PC-9 (cell line): ENCODE measurements at regions of chr6 and their contacts with region 1.

Region 1: GRCh38 chr6:30102970-30103874 is 9.7 kb downstream of the TRIM31 start:
- DNase-seq: peak; percentile 72 to 85
- H3K4me3 ChIP-seq: peak overlapping the region; percentile 55; the same call in 1 of the 2 replicates
- H3K27ac ChIP-seq: no peak overlapping the region
- H3K4me1 ChIP-seq: peaks cover 54% of the 10 kb centered on the region
- H3K27me3 ChIP-seq: no peaks in the 10 kb centered on the region
- CTCF ChIP-seq: peak; percentile 94

Region 2: DNA sequence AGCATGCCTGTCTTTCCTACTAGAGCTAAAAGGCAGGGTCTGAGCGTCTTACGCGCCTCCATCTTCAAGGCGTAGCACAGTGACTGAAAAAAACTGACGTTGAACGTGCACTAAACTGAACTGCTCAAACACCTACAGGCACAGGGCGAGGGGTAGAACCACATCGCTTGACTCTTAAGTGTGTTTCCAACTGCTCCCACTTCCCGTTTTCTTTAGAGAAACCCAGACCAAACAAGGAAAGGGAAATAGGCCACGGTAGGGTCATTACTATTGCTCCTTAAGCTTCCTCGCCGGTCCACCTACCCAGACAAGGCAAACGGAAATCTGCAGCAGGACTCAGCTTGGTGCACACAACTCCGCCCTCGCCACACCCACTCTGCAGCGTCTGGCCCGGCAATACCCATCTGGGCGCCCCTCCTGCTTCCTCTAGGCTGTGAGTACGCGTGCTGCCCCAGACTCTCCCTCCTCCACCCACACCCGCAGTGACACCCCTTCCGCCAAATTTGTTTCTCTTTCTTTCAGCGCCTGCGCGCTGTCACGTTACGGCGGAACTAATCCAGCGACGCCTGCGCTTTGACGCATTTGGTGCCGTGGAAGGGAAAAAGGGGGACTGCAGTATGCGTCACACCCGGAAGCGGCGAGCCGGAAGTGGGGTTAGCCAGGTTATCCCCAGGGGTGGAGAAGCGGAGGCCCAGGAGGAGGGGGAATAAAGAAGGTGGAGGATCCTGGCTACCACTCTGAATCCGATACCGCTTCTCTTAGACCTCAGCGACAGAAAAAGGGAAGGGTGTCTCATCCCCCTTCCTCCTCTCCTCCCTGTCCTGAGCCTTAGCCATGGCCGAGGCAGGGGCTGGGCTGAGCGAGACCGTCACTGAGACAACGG is 36.4 kb before region 1 on chr6 and contains the start of gene PPP1R11:
- CTCF ChIA-PET with region 1: interaction called, 7 read pairs
- POLR2A ChIA-PET with region 1: interaction called, 5 read pairs
- intact Hi-C with region 1: loop called (anchors 1 kb)
- DNase-seq: peak; percentile 96 to 99
- H3K4me3 ChIP-seq: peak within 1 kb of the TSS; percentile 81
- H3K27ac ChIP-seq: peak within 1 kb of the TSS; percentile 40
- H3K4me1 ChIP-seq: peaks cover 24% of the 10 kb centered on the region
- H3K27me3 ChIP-seq: no peaks in the 10 kb centered on the region
- CTCF ChIP-seq: no peak
- total RNA-seq, gene PPP1R11: 48.3 and 49.3 TPM in 2 replicates

Region 3: GRCh38 chr6:30091577-30092381 is 11.4 kb before region 1 on chr6:
- CTCF ChIA-PET with region 1: interaction called, 5 read pairs
- POLR2A ChIA-PET with region 1: interaction called, 8 read pairs
- intact Hi-C with region 1: loop called (anchors 1 kb)
- DNase-seq: peak; percentile 88 to 94
- H3K4me3 ChIP-seq: no peak overlapping the region
- H3K27ac ChIP-seq: peak overlapping the region; percentile 65
- H3K4me1 ChIP-seq: peaks cover 46% of the 10 kb centered on the region
- H3K27me3 ChIP-seq: no peaks in the 10 kb centered on the region
- CTCF ChIP-seq: no peak

Region 4: DNA sequence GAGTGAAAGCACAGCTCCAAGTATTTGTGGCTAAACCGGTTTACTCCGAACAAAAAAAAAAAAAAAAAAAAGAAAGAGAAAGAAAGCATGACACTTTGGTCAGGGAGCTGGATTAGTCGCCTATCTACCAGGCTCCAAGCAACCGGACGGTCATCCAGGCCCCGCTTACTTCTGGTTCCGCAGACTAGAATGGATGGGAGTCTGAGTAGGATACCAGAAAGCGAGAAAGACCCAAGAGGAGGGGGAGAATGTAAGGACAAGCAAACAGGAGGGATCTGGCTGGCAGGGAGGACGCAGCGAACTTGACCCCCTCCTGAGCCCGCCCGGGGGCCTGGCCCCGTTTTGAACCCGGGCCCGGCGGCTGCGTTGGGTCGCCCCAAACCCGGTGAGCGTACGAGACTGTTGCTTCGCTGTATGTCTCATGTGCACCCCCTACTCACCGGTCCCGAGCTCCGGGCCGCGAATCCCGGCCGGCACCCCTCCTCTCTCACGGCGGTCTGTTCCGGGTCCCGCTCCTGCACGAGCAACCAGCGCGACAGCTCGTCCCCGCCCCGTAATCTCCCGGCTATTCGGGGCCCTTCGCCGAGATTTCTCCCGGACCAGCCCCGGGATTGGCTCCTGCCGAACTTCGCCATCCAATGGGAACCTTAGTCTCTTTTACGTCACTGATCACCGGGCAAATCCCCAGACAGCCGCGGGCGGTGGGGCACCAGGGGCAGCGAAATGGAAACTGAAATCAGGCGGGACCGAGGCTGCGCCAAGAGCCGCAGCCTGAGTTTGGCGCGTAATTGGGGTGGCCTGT is 109.8 kb after region 1 on chr6 and contains the start of gene TRIM26:
- CTCF ChIA-PET with region 1: interaction called, 4 read pairs
- POLR2A ChIA-PET with region 1: no interaction called
- intact Hi-C with region 1: loop called (anchors 2 kb)
- DNase-seq: peak; percentile 94 to 99
- H3K4me3 ChIP-seq: peak within 1 kb of the TSS; percentile 95
- H3K27ac ChIP-seq: peak within 1 kb of the TSS; percentile 83
- H3K4me1 ChIP-seq: peaks cover 27% of the 10 kb centered on the region
- H3K27me3 ChIP-seq: no peaks in the 10 kb centered on the region
- CTCF ChIP-seq: no peak
- total RNA-seq, gene TRIM26: 45.3 and 53.9 TPM in 2 replicates